ENCODE measurements at regions of chr1 and their contacts with region 1.

Region 1: GRCh38 chr1:156226116-156226538 is 13.3 kb downstream of the PMF1 start:
- DNase-seq: no peak
- ATAC-seq: no peak
- H3K4me3 ChIP-seq: no peak overlapping the region
- H3K27ac ChIP-seq: peak overlapping the region in 1 of 4 donors; percentile 18
- H3K4me1 ChIP-seq: peaks cover 0 to 5% of the 10 kb centered on the region in 2 donors
- H3K27me3 ChIP-seq: no peaks in the 10 kb centered on the region
- CTCF ChIP-seq: no peak
- POLR2A ChIP-seq: no peak

Region 2: DNA sequence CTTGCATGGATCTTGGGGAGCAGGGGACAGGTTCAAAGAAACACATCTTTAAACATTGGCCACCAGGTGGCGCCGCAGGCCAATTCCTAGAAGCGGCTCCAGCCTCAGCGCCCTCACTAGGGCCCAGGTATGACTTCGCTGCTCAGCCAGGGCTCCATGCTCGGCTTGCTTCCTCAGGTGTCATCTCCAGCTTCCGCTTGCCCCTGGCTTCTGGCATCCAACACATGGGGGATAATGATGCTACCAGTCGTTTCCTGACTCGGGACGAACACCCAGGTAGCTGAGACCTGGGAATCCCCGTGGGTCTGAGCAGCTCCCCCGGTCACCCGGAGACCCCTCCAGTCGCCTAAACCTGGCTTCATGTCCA is 135.3 kb before region 1 on chr1:
- in situ Hi-C with region 1: loop called (anchors 5 kb)
- intact Hi-C with region 1: loop called (anchors 1 kb)
- DNase-seq: peak in 1 of 2 donors; percentile 77
- ATAC-seq: peak; percentile 90 to 94
- H3K4me3 ChIP-seq: no peak overlapping the region
- H3K27ac ChIP-seq: no peak overlapping the region
- H3K4me1 ChIP-seq: no peaks in the 10 kb centered on the region
- H3K27me3 ChIP-seq: no peaks in the 10 kb centered on the region
- CTCF ChIP-seq: peak; percentile 69 to 94 (median 90)
- POLR2A ChIP-seq: no peak

Region 3: DNA sequence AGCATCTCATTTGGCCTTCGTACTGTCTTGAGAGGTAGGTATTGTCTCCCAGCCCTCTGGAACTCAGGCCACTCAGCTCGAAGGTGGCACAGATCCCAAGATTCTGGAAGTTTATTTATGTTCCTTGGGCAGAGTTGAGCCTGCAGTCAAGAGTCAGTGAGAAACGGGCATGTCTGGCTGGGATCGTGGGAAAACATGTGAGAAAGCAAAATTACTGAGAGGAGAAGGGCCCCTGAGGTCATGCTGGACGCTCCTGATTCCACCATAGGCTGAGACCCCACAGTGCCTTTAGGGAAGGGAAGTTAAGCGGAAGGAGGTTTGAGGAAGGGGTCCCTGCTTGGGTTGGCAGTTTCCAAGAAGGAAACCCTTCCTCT is 85.3 kb before region 1 on chr1:
- in situ Hi-C with region 1: loop called in 3 of 4 experiments (anchors 5 kb)
- intact Hi-C with region 1: loop called (anchors 1 kb)
- DNase-seq: no peak
- ATAC-seq: peak in 1 of 2 donors; percentile 21
- H3K4me3 ChIP-seq: no peak overlapping the region
- H3K27ac ChIP-seq: peak overlapping the region; percentile 19 to 46 (median 33)
- H3K4me1 ChIP-seq: peaks cover 0 to under 1% of the 10 kb centered on the region in 2 donors
- H3K27me3 ChIP-seq: no peaks in the 10 kb centered on the region
- CTCF ChIP-seq: no peak
- POLR2A ChIP-seq: no peak

Region 4: DNA sequence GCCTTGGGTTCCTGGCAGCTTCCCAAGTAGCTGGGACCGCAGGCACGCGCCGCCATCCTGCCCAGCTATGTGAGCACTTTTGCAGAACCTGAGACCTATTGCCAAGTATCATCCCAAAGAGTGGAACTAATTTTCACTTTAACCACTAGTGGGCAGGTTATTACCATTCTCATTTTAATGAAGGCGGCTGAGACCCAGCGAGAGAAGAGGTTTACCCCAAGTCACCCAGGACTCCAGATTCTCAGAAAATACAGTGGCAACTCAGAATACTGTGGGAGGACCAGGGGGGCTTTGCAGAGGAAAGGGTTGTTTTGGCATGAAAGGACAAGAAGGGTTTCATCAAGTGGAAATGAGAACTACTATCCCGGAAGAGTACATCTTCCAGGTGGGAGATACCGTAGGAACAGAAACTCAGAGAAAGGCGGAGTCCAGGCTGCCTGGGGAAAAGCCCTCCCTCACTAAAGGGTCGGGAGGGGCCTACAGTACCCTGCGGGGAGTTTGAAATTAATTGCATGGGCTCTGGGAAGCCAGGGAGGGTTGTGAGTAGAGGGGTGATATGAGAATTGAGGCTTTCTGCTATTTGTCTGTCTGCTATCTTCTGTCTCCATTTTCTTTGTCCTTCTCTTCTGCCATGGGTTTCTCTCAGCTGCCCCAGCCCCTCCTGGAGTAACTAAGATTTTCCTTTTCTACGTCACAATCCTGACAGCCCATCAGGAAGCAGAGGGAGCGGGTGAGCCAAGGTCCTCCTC is 79.9 kb before region 1 on chr1:
- in situ Hi-C with region 1: loop called in 3 of 4 experiments (anchors 5 kb)
- intact Hi-C with region 1: loop called (anchors 1 kb)
- DNase-seq: peak in 1 of 2 donors; percentile 55
- ATAC-seq: peak; percentile 61 to 66
- H3K4me3 ChIP-seq: peak overlapping the region in 1 of 4 donors; percentile 6
- H3K27ac ChIP-seq: no peak overlapping the region
- H3K4me1 ChIP-seq: peaks cover 10 to 11% of the 10 kb centered on the region in 2 donors
- H3K27me3 ChIP-seq: peaks cover 8 to 21% (median 17%) of the 10 kb centered on the region in 3 donors
- CTCF ChIP-seq: peak; percentile 58 to 72 (median 67)
- POLR2A ChIP-seq: no peak

Region 5: GRCh38 chr1:156319664-156320063 is 93.5 kb after region 1 on chr1:
- in situ Hi-C with region 1: no loop called
- intact Hi-C with region 1: no loop called
- DNase-seq: no peak
- ATAC-seq: no peak
- H3K4me3 ChIP-seq: no peak overlapping the region
- H3K27ac ChIP-seq: no peak overlapping the region
- H3K4me1 ChIP-seq: no peaks in the 10 kb centered on the region
- H3K27me3 ChIP-seq: no peaks in the 10 kb centered on the region
- CTCF ChIP-seq: peak in 4 of 5 experiments; percentile 27 to 39 (median 34)
- POLR2A ChIP-seq: no peak

Region 6: GRCh38 chr1:156359973-156360372 is 133.8 kb after region 1 on chr1:
- in situ Hi-C with region 1: no loop called
- intact Hi-C with region 1: no loop called
- DNase-seq: no peak
- ATAC-seq: no peak
- H3K4me3 ChIP-seq: no peak overlapping the region
- H3K27ac ChIP-seq: no peak overlapping the region
- H3K4me1 ChIP-seq: no peaks in the 10 kb centered on the region
- H3K27me3 ChIP-seq: peaks cover 19 to 24% (median 22%) of the 10 kb centered on the region in 3 donors
- CTCF ChIP-seq: no peak
- POLR2A ChIP-seq: no peak

Region 7: DNA sequence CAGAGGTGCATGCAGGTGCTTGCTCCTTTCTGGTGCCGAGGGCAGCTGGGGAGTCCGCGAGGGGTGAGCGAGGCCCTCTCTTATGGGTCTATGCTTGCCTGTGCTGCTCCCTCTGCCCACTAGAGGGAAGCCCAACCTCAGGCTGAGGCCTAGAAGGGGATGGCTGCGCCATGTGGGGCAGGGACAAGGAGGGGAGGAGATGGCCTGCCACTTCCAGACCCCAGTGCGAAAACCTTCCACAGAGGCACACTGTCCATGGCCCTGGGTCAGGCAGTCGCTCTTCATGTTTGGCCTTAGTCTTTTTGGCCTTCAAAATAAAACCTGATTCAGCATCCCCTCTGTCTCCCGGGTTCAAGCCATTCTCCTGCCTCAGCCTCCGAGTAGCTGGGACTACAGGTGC is 156.9 kb after region 1 on chr1:
- in situ Hi-C with region 1: no loop called
- intact Hi-C with region 1: no loop called
- DNase-seq: peak in 1 of 2 donors; percentile 35
- ATAC-seq: peak in 1 of 2 donors; percentile 69
- H3K4me3 ChIP-seq: no peak overlapping the region
- H3K27ac ChIP-seq: no peak overlapping the region
- H3K4me1 ChIP-seq: no peaks in the 10 kb centered on the region
- H3K27me3 ChIP-seq: peaks cover 4 to 10% (median 4%) of the 10 kb centered on the region in 3 donors
- CTCF ChIP-seq: peak; percentile 43 to 71 (median 64)
- POLR2A ChIP-seq: no peak